GM10248 (cell line): ENCODE measurements at regions of chr3 and their contacts with region 1.

Region 1: GRCh38 chr3:70064194-70064779 is 64.8 kb downstream of the SAMMSON start:
- DNase-seq: peak; percentile 18
- CTCF ChIP-seq: peak; percentile 42

Region 2: GRCh38 chr3:70053293-70053692 is 11.0 kb before region 1 on chr3:
- CTCF ChIA-PET with region 1: interaction called, 11 read pairs
- POLR2A ChIA-PET with region 1: no interaction called
- DNase-seq: no peak
- CTCF ChIP-seq: no peak